ENCODE measurements at regions of chr9 and their contacts with region 1.

Region 1: GRCh38 chr9:28270156-28270555 is 696.9 kb upstream of the C9orf72 start:
- DNase-seq: no peak
- ATAC-seq: no peak
- H3K4me3 ChIP-seq: no peak overlapping the region
- H3K27ac ChIP-seq: no peak overlapping the region
- H3K4me1 ChIP-seq: no peaks in the 10 kb centered on the region
- H3K27me3 ChIP-seq: no peaks in the 10 kb centered on the region
- CTCF ChIP-seq: no peak
- POLR2A ChIP-seq: no peak

Region 2: DNA sequence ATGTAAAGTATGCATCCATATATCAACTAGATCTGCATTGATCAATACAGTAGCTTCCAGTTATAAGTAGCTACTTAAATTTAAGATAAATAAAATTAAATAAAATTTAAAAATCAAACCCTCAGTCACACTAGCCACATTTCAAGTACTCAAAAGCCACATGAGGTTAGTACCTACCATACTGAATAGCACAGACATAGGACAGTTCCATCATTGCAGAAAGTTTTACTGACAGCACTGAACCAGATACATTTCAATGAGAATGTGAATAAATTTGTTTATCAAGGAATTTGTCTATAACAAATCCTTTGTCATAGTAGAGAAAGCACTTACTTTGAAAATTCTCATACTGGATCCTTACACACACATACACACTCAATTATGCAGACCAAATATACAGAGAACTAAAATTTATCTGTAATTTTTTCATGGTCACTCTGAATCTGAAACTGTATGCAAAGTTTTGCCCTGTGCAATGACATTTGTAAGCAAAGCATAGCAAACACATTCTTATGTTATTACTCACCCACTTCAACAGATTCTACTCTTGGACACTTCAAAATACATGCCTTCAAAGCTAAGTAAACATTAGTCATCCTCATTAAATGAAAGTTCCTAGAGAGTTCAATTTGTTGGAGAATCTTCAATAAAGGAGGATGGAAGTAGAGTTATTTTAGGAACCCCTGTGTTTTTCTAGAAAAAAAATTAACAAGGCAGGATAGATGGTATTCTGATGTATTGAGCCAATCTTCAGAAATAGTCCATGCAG is 57.4 kb before region 1 on chr9:
- intact Hi-C with region 1: loop called in 1 of 10 experiments (anchors 10 kb)
- DNase-seq: no peak
- ATAC-seq: peak in 3 of 4 donors; percentile 49 to 69 (median 52)
- H3K4me3 ChIP-seq: no peak overlapping the region
- H3K27ac ChIP-seq: no peak overlapping the region
- H3K4me1 ChIP-seq: peaks cover 0 to 4% (median 0%) of the 10 kb centered on the region in 12 donors
- H3K27me3 ChIP-seq: no peaks in the 10 kb centered on the region
- CTCF ChIP-seq: no peak
- POLR2A ChIP-seq: no peak

Region 3: DNA sequence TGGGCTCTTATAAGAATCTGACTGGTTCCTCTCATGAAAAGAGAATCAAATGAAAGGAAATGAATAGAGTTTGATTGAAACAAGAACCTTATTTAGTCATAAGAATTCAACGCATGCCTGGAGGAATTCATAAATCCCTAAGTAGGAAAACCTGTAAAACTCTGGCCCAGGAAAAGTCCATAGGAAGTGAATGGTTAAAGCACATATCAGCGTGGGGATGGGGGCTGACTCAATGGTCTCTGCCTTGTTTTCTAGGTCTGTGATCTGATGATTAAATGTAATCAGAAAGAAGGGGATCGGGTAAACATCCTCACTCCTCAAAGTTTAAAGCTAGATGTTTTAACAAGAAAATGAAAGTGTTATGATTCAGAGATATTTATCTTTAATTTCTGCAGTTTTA is 62.5 kb after region 1 on chr9:
- intact Hi-C with region 1: loop called in 1 of 10 experiments (anchors 10 kb)
- DNase-seq: no peak
- ATAC-seq: no peak
- H3K4me3 ChIP-seq: no peak overlapping the region
- H3K27ac ChIP-seq: no peak overlapping the region
- H3K4me1 ChIP-seq: no peaks in the 10 kb centered on the region
- H3K27me3 ChIP-seq: no peaks in the 10 kb centered on the region
- CTCF ChIP-seq: no peak
- POLR2A ChIP-seq: no peak